ENCODE measurements at regions of chr18 and their contacts with region 1.

Region 1: GRCh38 chr18:9017170-9017904 is 85.2 kb upstream of the NDUFV2 start:
- DNase-seq: peak; percentile 94
- ATAC-seq: peak; percentile 93
- H3K4me3 ChIP-seq: peak overlapping the region; percentile 26; the same call in 1 of the 2 replicates
- H3K27ac ChIP-seq: peak overlapping the region; percentile 89
- H3K4me1 ChIP-seq: peaks cover 15% of the 10 kb centered on the region
- H3K27me3 ChIP-seq: no peaks in the 10 kb centered on the region
- CTCF ChIP-seq: 0 out of 2 replicates have a peak, but pooled peaks have one; percentile 6
- POLR2A ChIP-seq: peak; percentile 51; the same call in 1 of the 2 replicates
- RAD21 ChIP-seq: peak; percentile 20; the same call in 1 of the 2 replicates

Region 2: DNA sequence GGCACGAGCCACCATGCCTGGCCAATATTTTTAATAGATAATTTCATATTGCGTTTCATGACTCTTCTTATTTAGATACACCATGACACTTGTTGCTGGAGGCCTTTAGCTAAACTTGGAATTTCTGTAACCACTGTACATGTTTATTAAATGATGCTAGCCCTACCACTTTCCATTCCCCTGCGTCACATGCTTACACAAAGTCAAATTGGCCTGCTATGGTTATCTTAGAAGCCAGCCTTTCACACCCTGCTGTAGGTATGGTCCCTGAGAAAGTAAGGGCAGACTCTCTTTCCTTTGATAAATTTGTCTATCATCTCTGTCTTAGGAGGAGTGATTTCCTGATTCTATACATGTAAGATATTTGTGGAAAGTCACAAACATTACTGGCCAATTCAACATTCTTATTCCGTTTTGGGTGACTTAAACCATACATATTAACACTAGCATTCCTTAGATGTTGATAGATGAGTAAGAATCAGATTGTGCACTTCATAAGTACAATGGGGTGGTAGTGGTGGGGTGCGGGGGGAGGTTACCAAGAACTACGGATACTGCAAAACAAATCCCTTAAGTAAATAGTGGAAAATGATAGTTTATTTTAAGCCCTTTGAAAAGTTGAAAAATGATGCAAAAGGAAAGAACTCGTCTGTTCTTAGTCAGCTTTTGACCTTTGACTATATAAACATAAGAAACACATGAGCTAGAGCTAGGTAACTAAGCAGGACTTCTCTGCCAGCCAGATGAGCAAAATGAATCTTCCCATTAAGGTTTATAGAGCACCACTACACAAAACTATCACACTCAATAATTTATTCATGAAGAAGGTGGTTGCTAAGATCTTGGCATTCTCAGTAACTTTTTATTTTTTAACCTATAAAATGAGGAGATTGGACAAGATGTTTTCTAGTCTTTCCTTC is 77.2 kb after region 1 on chr18:
- CTCF ChIA-PET with region 1: no interaction called
- POLR2A ChIA-PET with region 1: no interaction called
- dilution Hi-C with region 1: no loop called
- in situ Hi-C with region 1: no loop called
- intact Hi-C with region 1: no loop called
- DNase-seq: peak; percentile 94
- ATAC-seq: peak; percentile 90
- H3K4me3 ChIP-seq: no peak overlapping the region
- H3K27ac ChIP-seq: peak overlapping the region; percentile 84
- H3K4me1 ChIP-seq: peaks cover 13% of the 10 kb centered on the region
- H3K27me3 ChIP-seq: no peaks in the 10 kb centered on the region
- CTCF ChIP-seq: no peak
- POLR2A ChIP-seq: no peak
- RAD21 ChIP-seq: no peak

Region 3: DNA sequence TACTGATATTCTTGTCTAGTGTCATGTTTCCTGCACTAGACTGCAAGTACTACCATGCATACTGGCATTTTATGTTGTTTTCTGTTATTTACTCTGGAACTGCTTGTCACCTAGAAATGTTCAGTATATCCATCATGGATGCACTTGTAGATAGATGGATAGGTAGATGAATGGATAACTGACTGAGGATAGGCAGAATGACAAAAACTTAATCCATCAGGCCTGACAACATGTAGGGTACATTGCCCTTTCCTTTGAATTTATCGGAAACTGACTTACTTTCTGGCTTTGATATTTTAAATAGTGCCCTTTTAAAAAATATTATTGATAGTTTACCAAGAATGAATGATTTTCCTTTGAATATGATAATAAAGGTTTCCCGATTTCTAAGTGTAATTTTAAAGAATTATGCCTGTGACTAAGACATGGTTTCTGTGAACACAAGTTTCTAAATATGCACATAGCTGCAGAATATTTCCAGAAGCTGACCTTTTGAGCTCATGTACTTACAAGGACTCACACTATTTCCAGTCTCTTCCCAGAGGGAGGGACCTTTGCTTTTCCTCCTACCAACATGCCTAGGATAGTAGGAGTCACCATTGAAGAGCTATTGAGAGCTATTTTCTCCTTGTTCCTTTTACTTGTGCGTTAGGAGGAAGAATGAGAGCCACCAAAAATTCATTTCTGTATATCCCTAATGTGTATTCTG is 200.6 kb after region 1 on chr18:
- CTCF ChIA-PET with region 1: no interaction called
- POLR2A ChIA-PET with region 1: no interaction called
- dilution Hi-C with region 1: no loop called
- in situ Hi-C with region 1: no loop called
- intact Hi-C with region 1: no loop called
- DNase-seq: peak; percentile 7
- ATAC-seq: no peak
- H3K4me3 ChIP-seq: no peak overlapping the region
- H3K27ac ChIP-seq: no peak overlapping the region
- H3K4me1 ChIP-seq: no peaks in the 10 kb centered on the region
- H3K27me3 ChIP-seq: no peaks in the 10 kb centered on the region
- CTCF ChIP-seq: no peak
- POLR2A ChIP-seq: no peak
- RAD21 ChIP-seq: no peak

Region 4: DNA sequence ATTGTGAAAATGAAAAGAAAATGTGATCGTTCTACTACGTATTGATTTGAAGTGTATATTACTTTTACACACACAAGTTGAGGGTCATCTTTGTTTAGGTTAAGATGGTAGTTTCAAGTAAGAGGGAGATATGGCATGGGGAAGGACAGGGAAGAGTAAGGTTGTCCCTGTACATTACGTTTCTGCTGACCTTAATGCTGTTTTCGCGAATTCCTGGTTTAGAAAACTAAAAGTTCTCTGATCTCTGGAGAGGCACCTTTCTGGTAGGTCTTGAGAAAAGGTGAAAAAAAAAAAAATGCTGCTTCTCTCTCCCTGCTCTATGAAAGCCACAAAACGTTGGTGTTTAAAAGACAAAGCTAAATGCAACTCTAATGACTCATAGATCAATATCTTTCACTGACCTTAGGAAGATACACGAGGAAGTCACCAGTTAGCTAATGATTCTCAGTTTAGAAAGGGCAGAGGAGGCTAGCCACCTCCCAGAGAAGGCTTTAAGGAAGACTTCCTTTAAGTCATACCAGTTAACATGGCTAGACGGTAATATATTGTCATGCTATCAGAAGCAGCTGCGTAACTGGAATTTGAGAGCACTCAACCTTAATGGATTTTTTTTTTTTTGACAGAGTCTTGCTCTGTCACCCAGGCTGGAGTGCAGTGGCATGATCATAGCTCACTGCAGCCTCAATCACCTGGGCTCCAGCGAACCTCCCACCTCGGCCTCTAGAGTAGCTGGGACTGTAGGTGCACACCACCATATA is 881.6 kb after region 1 on chr18:
- CTCF ChIA-PET with region 1: no interaction called
- POLR2A ChIA-PET with region 1: no interaction called
- dilution Hi-C with region 1: no loop called
- in situ Hi-C with region 1: no loop called
- intact Hi-C with region 1: no loop called
- DNase-seq: peak; percentile 37
- ATAC-seq: no peak
- H3K4me3 ChIP-seq: no peak overlapping the region
- H3K27ac ChIP-seq: no peak overlapping the region
- H3K4me1 ChIP-seq: no peaks in the 10 kb centered on the region
- H3K27me3 ChIP-seq: no peaks in the 10 kb centered on the region
- CTCF ChIP-seq: no peak
- POLR2A ChIP-seq: no peak
- RAD21 ChIP-seq: no peak

Region 5: DNA sequence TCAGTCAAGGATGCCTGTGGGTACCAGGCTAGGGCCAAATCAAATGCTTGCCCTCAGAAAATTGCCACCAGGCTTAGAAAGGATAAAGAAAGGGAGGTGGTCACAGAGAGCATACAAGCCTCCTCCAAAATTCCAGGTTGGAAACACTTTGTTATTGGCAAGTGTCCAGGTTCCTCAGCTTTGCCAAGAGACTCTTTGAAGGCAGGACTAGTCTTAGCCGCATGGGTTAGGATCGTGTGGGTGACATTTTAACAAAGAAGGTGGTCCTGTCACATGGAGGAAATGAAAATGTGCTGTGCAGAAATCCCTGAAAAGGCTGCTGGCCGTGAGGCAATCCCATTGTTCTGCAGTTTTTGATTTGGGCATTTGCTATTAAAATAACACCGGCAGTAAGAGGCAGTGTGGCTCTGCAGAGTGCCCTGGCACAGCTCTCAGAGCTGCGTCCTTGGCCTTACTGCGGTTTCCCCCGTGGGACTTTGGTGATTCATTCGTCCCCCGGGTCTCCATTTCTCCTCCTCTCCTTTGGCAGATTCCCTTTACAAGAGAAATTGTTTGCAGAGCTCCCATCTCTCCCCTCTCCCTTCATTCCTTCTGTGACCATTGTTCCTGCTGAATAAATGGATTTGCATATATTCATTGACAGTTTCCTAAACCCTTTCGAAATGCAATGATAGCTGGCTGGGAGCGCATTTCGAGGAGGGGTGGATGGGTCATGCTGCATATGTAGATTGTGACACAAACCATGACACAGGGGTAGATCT is 1083.8 kb after region 1 on chr18:
- CTCF ChIA-PET with region 1: no interaction called
- POLR2A ChIA-PET with region 1: no interaction called
- dilution Hi-C with region 1: no loop called
- in situ Hi-C with region 1: no loop called
- intact Hi-C with region 1: loop called (anchors 10 kb)
- DNase-seq: no peak
- ATAC-seq: peak; percentile 24
- H3K4me3 ChIP-seq: no peak overlapping the region
- H3K27ac ChIP-seq: no peak overlapping the region
- H3K4me1 ChIP-seq: peaks cover 5% of the 10 kb centered on the region; the same call in 1 of the 2 replicates
- H3K27me3 ChIP-seq: peaks cover 15% of the 10 kb centered on the region
- CTCF ChIP-seq: no peak
- POLR2A ChIP-seq: no peak
- RAD21 ChIP-seq: no peak

Measured in IMR-90 (cell line).